ENCODE measurements at regions of chr2 and their contacts with region 1.

Region 1: DNA sequence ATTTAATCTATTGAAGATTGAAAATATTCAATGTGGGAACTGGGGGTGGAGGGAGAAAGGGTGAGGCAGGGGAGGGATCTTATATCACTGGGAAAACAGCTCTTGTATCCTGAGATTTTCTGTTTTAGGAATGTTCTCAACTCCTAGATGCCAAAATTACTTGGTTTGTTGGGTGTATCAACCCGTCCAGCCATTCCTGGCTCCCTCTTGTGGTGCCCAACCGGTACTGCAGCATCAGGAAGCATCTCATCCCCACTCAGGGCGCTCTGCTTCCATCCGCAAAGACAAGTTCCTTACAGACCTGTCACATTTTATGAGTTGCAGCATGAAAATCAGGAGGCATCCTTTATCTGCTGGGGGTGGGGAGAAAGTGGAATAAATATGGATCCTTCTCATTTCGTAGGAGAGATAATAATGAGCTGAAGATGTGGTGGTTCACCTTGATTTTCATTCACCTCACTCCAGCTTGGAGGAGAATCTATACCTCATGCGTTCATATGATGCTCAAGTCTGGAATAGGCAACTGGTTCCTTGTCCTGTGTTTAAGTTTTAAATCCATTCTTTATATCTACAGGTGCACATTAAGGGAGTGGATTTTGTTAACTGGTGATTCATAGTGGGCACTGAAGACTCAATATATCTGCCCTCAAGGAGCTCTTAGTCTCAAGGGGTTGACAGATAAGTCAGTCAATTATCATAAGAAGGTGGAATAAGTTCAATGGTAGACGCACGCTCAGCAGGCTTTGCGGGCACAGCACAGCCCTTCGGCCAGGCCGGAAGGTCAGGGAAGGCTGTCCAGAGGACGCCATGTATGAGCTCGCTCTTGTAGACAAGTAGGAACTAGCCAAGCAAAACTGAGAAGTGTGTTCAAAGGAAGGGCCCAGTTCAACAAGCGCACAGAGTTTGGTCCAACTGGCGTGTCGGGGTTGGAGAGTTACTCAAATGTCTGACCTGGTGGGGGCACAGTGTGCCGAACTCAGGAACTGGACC is 127.3 kb downstream of the RNF144A start:
- DNase-seq: peak in 3 of 6 donors; percentile 72 to 78 (median 75)
- ATAC-seq: peak; percentile 63 to 95 (median 86)
- H3K4me3 ChIP-seq: no peak overlapping the region
- H3K27ac ChIP-seq: no peak overlapping the region
- H3K4me1 ChIP-seq: no peaks in the 10 kb centered on the region
- H3K27me3 ChIP-seq: no peaks in the 10 kb centered on the region
- CTCF ChIP-seq: peak; percentile 71 to 91 (median 84)

Region 2: DNA sequence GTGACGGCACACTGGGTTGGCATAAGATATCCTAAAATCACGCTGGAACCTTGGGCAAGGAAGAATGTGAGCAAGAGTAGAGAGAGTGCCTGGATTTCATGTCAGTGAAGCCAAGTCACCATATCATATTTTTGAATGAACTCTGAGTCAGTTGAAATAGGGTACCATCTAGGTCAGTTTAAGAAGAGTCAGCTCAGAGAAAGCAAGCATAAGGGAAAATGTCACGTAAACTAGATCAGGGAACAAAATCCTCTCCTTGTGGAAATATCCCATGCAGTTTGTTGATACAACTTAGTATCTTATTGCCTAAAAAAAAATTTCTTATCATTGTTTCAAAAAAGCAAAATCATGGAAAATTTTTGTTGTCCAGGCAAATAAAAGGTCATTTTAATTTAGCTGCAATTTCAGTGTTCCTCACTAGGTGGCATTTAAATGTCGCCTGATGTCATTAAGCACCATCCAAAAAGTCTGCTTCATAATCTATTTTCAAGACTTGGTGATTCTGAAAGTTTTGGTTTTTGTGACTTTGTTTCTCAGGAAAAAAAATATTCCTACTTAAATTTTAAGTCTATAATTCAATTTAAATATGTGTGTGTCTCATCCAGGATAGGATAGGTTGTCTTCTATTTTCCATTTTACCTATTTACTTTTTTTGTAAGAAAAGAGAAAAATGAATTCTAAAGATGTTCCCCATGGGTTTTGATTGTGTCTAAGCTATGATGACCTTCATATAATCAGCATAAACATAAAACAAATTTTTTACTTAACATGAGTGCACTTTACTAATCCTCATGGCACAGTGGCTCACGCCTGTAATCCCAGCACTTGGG is 147.4 kb before region 1 on chr2:
- intact Hi-C with region 1: loop called in 1 of 3 experiments (anchors 5 kb)
- DNase-seq: no peak
- ATAC-seq: peak; percentile 72 to 89 (median 82)
- H3K4me3 ChIP-seq: no peak overlapping the region
- H3K27ac ChIP-seq: no peak overlapping the region
- H3K4me1 ChIP-seq: peaks cover 0 to 6% (median 0%) of the 10 kb centered on the region in 3 donors
- H3K27me3 ChIP-seq: no peaks in the 10 kb centered on the region
- CTCF ChIP-seq: peak; percentile 13 to 59 (median 37)

Region 3: GRCh38 chr2:6922201-6922685 is 122.3 kb before region 1 on chr2:
- intact Hi-C with region 1: loop called in 1 of 3 experiments (anchors 10 kb)
- DNase-seq: peak in 1 of 6 donors; percentile 40
- ATAC-seq: peak in 3 of 4 donors; percentile 20 to 31 (median 25)
- H3K4me3 ChIP-seq: no peak overlapping the region
- H3K27ac ChIP-seq: peak overlapping the region in 1 of 4 donors; percentile 28
- H3K4me1 ChIP-seq: peaks cover 22 to 67% (median 66%) of the 10 kb centered on the region in 3 donors
- H3K27me3 ChIP-seq: no peaks in the 10 kb centered on the region
- CTCF ChIP-seq: peak in 1 of 4 donors; percentile 8

Measured in pancreas (tissue), 10 donors.